ENCODE measurements at regions of chr1 and their contacts with region 1.

Region 1: GRCh38 chr1:41673378-41673777 is 188.9 kb upstream of the EDN2 start:
- DNase-seq: no peak
- H3K4me3 ChIP-seq: no peak overlapping the region
- H3K27ac ChIP-seq: peak overlapping the region in 41 of 59 donors; percentile 15 to 89 (median 67)
- H3K27me3 ChIP-seq: no peaks in the 10 kb centered on the region
- CTCF ChIP-seq: no peak

Region 2: DNA sequence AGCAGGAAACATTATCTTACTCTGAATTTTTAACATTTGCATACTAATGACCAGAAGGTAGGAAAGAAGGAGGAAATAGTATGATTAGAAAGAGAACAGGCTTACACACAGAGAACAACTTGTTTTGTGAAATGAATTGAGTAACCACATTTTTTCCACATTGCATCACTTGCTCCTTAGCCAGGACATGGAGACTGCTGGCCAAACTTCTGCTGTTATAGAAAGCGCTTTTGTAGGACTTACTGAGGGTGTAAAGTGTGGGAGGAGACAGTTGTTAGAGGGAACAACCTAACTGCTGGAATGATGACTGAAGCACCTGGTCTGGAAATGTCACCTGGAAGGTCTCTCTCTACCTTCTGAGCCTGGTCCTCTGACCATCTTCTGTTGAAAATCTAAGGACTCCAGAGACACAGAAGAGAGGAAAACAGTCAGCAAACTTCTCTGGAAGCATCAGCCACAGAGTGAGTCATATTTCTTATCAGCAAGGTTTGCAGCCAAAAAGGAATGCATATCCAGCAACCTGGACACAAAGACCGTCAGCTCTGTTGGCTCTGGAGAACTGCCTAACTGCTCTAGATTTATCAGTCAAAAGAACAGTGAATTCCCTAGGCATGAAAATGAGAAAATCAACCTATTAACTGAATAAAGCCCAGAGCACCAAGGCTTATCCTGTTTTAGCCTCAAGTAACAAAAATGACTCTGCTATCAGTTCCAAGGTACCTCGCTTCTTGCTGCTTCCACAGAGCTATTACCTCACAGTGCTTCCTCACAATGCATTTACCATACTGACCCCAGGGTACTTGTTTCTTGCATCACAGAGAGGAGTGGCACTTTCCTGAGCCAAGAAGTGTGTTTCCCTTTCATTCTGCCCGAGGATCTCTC is 563.8 kb before region 1 on chr1:
- intact Hi-C with region 1: no loop called
- DNase-seq: peak in 1 of 10 donors; percentile 14
- H3K4me3 ChIP-seq: no peak overlapping the region
- H3K27ac ChIP-seq: peak overlapping the region in 46 of 59 donors; percentile 1 to 84 (median 54)
- H3K27me3 ChIP-seq: no peaks in the 10 kb centered on the region
- CTCF ChIP-seq: no peak

Region 3: GRCh38 chr1:41631971-41632370 is 41.4 kb before region 1 on chr1:
- intact Hi-C with region 1: loop called in 1 of 2 experiments (anchors 5 kb)
- DNase-seq: peak in 1 of 10 donors; percentile 4
- H3K4me3 ChIP-seq: no peak overlapping the region
- H3K27ac ChIP-seq: no peak overlapping the region
- H3K27me3 ChIP-seq: no peaks in the 10 kb centered on the region
- CTCF ChIP-seq: no peak